ENCODE measurements at regions of chr11 and their contacts with region 1.

Region 1: DNA sequence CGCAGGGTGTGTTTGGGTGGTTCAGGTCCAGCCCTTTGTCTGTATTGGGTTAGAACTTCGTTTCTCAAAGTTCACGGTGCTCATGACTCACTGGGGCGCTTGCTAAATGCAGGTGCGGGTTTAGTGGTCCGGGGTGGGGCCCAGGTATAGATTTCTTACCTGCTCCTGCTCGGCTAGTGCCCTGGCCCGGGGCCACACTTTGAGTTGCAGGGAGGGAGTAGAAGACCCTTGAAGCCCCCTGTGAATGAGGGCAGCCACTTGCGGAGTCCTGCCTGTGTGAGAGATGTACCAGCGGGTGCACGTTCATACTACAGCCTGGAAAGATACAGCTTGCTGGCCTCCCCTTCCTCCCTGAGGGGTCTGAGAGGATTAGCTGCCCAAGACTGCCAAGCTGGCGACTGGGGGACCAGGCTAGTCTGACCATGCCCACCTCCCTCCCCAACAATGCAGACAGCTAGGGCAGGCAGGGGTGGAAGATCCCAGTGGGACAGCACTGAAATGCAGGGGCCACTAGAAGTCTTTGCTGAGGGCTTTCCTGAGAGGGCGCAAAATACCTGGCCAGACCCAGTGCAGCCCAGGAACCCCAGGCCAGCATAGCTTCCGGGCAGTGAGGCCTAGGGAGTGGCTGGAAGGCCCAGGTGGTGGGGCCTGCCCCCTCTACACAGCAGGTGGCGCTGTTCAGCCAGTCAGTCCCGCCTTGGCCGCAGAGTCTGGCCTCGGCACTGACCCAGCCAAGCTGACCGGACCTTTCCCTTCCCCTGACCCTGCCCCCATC is 5.1 kb upstream of the MYRF start:
- DNase-seq: no peak
- H3K4me3 ChIP-seq: no peak overlapping the region
- H3K27me3 ChIP-seq: no peaks in the 10 kb centered on the region
- CTCF ChIP-seq: peak; percentile 95

Region 2: GRCh38 chr11:61733120-61733978 is 14.0 kb before region 1 on chr11:
- CTCF ChIA-PET with region 1: interaction called, 42 read pairs
- POLR2A ChIA-PET with region 1: no interaction called
- DNase-seq: peak; percentile 18
- H3K4me3 ChIP-seq: no peak overlapping the region
- H3K27me3 ChIP-seq: no peaks in the 10 kb centered on the region
- CTCF ChIP-seq: peak; percentile 100

Region 3: DNA sequence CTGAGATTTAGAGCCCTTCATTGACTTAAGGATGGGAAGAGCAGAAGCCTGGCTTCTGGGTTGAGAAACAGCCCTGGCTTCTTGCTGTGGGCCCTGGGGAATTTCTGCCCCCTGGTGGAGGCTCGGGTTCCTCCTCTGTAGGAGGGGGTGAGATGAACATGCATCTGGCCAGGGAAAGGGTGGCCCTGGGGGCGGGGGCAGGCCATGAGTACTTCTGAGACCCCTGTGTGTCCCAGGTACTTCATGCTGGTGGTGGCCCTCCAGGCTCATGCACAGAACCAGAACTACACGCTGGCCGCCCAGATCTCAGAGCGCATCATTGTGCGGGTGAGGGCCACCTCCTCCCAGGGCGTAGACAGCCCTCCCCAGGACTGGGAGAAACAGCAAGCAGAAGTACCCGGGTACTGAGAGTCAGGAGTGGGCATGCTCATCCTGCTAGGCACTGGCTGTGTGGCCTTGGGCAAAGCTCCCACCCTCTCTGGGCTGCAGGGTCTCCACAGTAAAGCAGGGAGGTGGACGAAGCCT is 29.2 kb after region 1 on chr11:
- CTCF ChIA-PET with region 1: interaction called, 25 read pairs
- POLR2A ChIA-PET with region 1: no interaction called
- DNase-seq: no peak
- H3K4me3 ChIP-seq: no peak overlapping the region
- H3K27me3 ChIP-seq: no peaks in the 10 kb centered on the region
- CTCF ChIP-seq: peak; percentile 87

Region 4: DNA sequence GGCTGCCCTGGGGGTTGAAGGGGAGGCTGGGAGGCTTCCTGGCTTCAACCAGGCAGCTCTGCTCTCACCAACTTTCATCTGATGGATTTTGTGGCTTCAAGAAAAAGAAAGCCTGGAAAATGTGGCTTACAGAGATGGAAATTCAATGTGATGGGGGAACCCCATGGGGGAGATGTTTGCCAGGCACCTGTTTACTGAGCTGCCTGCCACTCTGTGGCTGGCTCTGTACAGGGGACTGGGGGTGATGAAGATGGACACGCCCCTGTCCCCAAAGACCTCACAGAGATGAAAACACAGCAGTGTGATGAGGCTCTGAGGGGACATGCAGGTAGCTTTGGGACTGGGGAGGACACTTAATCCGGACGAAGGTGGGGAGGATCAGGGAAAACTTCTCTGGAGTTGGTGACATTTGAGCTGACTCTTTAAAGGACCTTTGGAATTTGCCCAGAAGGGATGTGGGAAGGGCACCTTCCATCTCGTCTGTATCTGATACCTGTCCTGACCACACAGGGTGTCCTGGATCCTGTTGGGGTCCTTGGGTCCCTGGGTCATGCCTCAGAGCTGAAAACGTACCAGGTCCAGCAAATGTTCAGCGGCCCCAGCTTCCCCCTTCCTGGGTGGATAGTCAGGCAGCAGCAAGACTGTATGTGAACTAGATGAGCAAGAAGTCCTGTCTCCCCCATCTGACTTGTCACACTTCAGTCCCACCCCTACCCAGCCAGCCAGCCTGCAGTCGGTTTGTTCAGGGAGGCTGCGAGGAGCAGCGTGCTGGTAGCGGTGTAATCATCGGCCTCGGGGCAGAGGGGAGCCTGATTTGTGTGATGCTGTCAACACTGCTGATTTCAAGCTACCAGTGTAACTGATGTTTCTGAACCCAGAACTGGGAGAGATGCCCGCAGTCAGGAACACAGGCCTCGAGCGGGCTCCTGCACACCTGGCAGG is 35.2 kb after region 1 on chr11:
- CTCF ChIA-PET with region 1: interaction called, 34 read pairs
- POLR2A ChIA-PET with region 1: no interaction called
- DNase-seq: no peak
- H3K4me3 ChIP-seq: no peak overlapping the region
- H3K27me3 ChIP-seq: no peaks in the 10 kb centered on the region
- CTCF ChIP-seq: no peak

Region 5: DNA sequence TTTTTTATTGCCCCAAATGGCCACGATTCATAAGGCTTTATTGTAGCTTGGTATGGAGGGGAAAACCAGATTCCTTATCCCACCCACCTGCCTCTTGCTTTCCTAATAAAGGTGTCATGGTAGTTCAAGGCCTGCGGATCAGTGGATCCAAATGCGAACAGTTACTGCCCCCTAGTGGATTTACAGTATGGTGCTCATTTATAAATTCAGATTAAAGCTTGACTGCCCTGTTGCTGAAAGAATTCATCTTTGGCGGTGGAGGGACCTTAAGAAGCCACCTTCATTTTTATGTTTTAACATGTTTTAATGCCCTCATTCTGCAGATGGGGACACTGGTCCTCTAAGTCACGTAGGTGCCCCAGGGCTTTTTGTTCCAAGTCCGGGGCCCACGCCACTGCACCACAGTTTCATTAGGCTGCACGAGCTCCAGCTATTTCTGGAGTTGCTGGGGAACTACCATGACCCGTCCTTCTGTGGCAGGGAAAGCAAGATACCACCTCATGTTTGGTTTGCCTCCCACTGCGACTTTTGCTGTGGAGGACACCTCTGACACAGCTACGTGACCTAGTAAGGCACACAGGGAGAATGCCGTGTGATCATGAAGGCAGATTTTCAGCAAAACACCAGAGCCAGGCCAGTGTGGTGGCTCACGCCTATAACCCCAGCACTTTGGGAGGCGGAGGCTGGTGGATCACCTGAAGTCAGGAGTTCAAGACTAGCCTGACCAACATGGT is 360.8 kb after region 1 on chr11:
- CTCF ChIA-PET with region 1: interaction called, 68 read pairs
- POLR2A ChIA-PET with region 1: no interaction called
- DNase-seq: no peak
- H3K4me3 ChIP-seq: no peak overlapping the region
- H3K27me3 ChIP-seq: no peaks in the 10 kb centered on the region
- CTCF ChIP-seq: peak; percentile 72

Measured in BJ (cell line).